OCI-LY7 (cell line): ENCODE measurements at regions of chr9 and their contacts with region 1.

Region 1: GRCh38 chr9:99140685-99141314 is 35.9 kb downstream of the TGFBR1 start:
- DNase-seq: peak; percentile 69
- H3K4me3 ChIP-seq: no peak overlapping the region
- H3K27ac ChIP-seq: no peak overlapping the region
- H3K4me1 ChIP-seq: peaks cover 17% of the 10 kb centered on the region
- CTCF ChIP-seq: peak; percentile 96

Region 2: GRCh38 chr9:98848450-98849149 is 292.2 kb before region 1 on chr9:
- CTCF ChIA-PET with region 1: no interaction called
- POLR2A ChIA-PET with region 1: no interaction called
- intact Hi-C with region 1: loop called (anchors 1 kb)
- DNase-seq: peak; percentile 76
- H3K4me3 ChIP-seq: no peak overlapping the region
- H3K27ac ChIP-seq: no peak overlapping the region
- H3K4me1 ChIP-seq: no peaks in the 10 kb centered on the region
- CTCF ChIP-seq: peak; percentile 94

Region 3: DNA sequence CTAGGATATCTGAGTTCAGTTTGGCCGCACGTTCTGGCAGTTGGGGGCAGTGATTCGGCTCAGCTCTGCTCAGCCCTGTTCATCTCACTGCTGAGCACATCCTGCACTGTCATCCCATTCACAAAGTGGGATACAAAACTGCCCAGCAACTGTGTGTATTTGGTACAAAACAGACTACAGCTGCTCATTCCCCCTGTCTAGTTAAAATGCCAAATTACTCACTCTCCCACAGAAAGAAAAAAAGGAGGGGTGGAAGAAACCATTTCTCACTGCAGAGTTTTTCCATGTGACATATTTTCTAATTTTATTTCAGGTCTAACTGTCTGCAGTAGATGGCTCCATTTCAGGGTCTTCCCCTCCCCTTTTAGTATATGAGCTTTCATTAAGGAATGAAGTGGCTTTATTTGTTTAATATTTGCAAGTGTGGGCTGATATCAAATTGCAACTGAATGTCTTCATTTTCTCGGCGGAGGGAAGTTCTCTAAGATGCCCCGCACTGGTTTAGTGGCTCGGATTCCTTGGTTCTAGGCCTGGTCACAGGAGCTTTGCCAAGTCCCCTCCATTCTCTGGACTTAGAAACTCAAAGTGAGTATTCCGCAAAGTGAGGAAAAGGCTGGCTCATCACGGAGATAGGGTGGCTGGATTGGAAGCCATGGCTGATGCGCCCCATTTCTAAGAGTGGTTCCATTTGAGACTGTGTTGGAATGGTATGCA is 182.4 kb before region 1 on chr9:
- CTCF ChIA-PET with region 1: no interaction called
- POLR2A ChIA-PET with region 1: no interaction called
- intact Hi-C with region 1: no loop called
- DNase-seq: no peak
- H3K4me3 ChIP-seq: no peak overlapping the region
- H3K27ac ChIP-seq: no peak overlapping the region
- H3K4me1 ChIP-seq: no peaks in the 10 kb centered on the region
- CTCF ChIP-seq: no peak

Region 4: GRCh38 chr9:98974994-98975712 is 165.6 kb before region 1 on chr9:
- CTCF ChIA-PET with region 1: no interaction called
- POLR2A ChIA-PET with region 1: no interaction called
- intact Hi-C with region 1: loop called (anchors 2 kb)
- DNase-seq: peak; percentile 47
- H3K4me3 ChIP-seq: no peak overlapping the region
- H3K27ac ChIP-seq: no peak overlapping the region
- H3K4me1 ChIP-seq: no peaks in the 10 kb centered on the region
- CTCF ChIP-seq: peak; percentile 88

Region 5: DNA sequence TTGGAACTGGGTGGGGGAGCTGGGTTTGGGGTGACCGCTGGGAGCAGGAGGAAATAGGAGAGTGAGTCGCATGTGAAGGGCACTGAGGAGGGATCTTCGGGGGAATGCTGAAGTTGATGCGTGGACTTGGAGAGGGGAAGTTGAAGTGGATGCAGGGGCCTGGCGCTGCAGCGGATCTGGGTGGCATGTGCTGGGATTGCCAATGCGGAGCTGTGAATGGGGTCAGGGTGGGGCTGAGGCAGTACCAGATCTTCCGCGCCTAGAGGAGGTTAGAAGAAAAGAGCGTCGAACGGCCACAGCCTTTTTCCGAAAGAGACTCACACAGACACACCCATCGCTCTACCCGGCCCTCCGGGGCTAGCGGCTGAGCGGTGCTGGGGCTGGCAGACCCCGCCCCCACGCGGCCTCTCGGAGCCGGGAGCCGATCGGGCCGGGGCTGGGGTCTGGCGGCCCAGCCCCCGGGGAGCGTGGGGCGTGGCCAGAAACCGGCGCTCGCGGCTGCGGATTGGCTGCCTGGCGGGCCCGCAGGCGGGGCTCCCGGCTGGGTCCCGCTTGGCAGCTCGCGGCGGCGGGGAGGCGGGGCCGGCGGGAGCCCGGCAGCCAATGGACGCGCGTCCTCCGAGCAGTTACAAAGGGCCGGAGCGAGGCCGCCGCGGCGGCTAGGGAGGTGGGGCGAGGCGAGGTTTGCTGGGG is 36.2 kb before region 1 on chr9 and contains the start of gene TGFBR1:
- CTCF ChIA-PET with region 1: no interaction called
- POLR2A ChIA-PET with region 1: interaction called, 4 read pairs
- intact Hi-C with region 1: loop called (anchors 2 kb)
- DNase-seq: peak; percentile 95
- H3K4me3 ChIP-seq: peak within 1 kb of the TSS; percentile 78
- H3K27ac ChIP-seq: peak within 1 kb of the TSS; percentile 31
- H3K4me1 ChIP-seq: peaks cover 46% of the 10 kb centered on the region
- CTCF ChIP-seq: no peak
- total RNA-seq, gene TGFBR1: 13.6 and 14.3 TPM in 2 replicates

Region 6: DNA sequence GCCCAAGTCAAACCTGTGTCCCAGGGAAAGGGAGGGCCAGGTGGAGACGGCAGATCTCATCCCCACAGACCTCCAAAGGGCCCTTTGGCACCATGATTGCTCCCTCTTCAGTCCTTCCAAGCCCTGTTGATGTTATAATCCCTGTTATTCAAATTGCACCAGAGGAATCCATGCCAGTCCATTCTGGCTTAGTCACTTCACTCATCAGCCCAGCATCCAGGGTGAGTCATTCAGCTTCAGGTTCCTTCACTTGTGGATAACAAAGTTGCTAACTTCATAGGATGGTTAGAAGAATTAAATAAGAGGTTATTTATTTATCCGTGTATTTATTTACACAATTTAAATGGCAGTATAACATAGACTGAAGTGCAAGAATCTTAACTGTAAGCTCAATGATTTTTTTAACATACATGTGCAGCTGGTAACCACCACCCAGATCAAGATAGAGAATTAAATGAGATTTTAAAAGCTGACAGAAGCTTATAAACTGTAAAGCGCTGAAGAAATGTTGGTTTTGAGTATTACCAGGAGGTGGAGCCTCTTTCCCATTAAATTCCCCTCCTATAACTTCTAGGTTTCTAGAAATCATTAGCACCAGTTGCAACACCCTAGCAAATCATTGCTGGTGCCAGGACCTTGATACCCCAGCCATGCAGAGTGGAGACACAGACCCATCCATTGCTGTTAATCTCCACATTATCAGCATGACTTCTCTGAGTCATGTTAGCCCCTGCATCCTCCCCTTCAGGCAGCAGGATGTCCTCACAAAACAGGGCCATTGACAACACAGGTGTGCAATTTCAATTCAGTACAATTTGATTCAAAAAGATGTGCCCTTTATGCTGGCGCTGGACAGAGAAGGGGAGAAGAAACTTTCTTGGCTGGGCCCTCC is 158.7 kb after region 1 on chr9:
- CTCF ChIA-PET with region 1: no interaction called
- POLR2A ChIA-PET with region 1: no interaction called
- intact Hi-C with region 1: no loop called
- DNase-seq: peak; percentile 7
- H3K4me3 ChIP-seq: no peak overlapping the region
- H3K27ac ChIP-seq: no peak overlapping the region
- H3K4me1 ChIP-seq: no peaks in the 10 kb centered on the region
- CTCF ChIP-seq: peak; percentile 57